Psoas muscle (tissue), 8 donors: ENCODE measurements at regions of chr4 and their contacts with region 1.

Region 1: GRCh38 chr4:128854433-128854832 is 44.9 kb downstream of the JADE1 start:
- DNase-seq: no peak
- ATAC-seq: no peak
- H3K4me3 ChIP-seq: no peak overlapping the region
- H3K27ac ChIP-seq: no peak overlapping the region
- H3K4me1 ChIP-seq: peaks cover 10% of the 10 kb centered on the region
- H3K27me3 ChIP-seq: no peaks in the 10 kb centered on the region
- CTCF ChIP-seq: no peak

Region 2: GRCh38 chr4:128809477-128810330 is 44.7 kb before region 1 on chr4 and contains the start of gene JADE1:
- intact Hi-C with region 1: loop called in 1 of 2 experiments (anchors 5 kb)
- DNase-seq: peak; percentile 88 to 93
- ATAC-seq: peak; percentile 57 to 70 (median 66)
- H3K4me3 ChIP-seq: peak within 1 kb of the TSS; percentile 85
- H3K27ac ChIP-seq: peak within 1 kb of the TSS; percentile 97
- H3K4me1 ChIP-seq: peaks cover 8% of the 10 kb centered on the region
- H3K27me3 ChIP-seq: no peaks in the 10 kb centered on the region
- CTCF ChIP-seq: no peak
- total RNA-seq, gene JADE1: 16.8 to 21.4 (median 19.0) TPM